Activated T-helper 2 cell treated with anti-CD3 and anti-CD28 coated beads, Interferon-gamma antibody, Interleukin-2, Interleukin-4, amounts not matched to agents 10 μg/mL and 5 μg/mL and 100 μg/mL, durations not matched to agents 14 hours and 24 hours and 36 hours (primary cell): ENCODE measurements at regions of chr11 and their contacts with region 1.

Region 1: DNA sequence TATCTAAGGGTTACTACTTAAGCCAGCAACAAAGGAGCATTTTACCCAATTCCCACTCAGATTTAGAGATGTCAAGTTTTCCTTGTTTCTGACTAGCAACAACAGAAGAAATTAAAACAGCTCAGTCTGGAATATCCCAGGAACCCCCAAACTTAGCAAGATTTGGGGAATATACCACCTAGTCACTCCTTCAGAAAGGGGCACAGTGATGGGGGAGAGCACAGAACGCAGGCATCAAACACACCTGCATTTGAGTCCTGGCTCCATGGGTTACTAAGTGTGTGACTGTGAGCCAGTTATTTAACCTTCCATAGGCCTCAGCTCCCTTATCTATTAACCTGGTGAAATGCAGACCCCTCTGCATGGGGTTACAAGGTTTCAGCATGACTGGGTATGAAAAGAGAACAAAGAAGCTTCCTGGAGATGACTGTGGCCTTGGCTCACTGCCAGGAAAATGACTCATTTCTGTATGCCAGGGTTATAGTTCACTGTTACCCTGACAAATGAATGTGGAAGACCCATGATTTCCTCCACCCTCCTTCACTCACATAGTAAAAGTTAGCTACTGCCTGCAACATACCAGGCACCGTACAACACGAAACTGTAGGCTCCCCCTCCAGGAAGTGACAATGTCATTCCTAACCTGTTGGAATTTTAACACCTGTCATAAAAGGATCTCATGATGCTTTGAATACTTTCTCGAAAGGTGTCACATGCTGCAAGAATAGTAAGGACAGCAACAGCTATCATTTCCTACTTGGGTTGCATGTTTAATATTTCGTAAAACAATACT is 79.6 kb downstream of the ME3 start:
- DNase-seq: peak; percentile 74
- H3K4me3 Mint-ChIP-seq: no peak overlapping the region
- H3K27ac Mint-ChIP-seq: peak overlapping the region; percentile 81
- H3K4me1 Mint-ChIP-seq: peaks cover 43% of the 10 kb centered on the region
- H3K27me3 Mint-ChIP-seq: no peaks in the 10 kb centered on the region

Region 2: GRCh38 chr11:85947431-85948272 is 645.2 kb before region 1 on chr11:
- intact Hi-C with region 1: loop called (anchors 5 kb)
- DNase-seq: no peak
- H3K4me3 Mint-ChIP-seq: peak overlapping the region; percentile 15
- H3K27ac Mint-ChIP-seq: peak overlapping the region; percentile 75
- H3K4me1 Mint-ChIP-seq: peaks cover 35% of the 10 kb centered on the region
- H3K27me3 Mint-ChIP-seq: no peaks in the 10 kb centered on the region

Region 3: DNA sequence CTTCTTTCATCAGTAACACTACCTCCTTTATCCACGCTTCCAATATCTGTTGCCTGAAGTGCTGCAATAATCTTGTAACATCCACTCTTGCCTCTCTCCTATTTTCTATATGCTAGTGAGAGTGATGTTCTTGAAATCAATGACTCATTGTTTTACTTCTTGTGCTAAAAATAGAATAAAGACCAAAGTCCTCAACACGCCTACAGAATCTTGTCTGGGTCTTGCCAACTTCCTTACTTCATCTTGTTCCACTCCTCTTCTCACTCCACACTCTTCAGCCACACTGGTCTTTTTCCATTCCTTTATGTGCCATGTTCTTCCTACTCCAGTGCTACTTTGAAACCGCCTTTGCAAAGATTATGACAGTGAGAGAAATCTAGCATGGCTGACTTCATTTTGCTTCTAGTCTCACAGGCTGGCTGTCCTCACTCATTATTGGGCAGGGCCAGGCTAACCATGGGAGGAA is 81.7 kb before region 1 on chr11:
- intact Hi-C with region 1: loop called (anchors 1 kb)
- DNase-seq: no peak
- H3K4me3 Mint-ChIP-seq: no peak overlapping the region
- H3K27ac Mint-ChIP-seq: no peak overlapping the region
- H3K4me1 Mint-ChIP-seq: no peaks in the 10 kb centered on the region
- H3K27me3 Mint-ChIP-seq: peaks cover under 1% of the 10 kb centered on the region

Region 4: GRCh38 chr11:86608251-86608799 is 15.5 kb after region 1 on chr11:
- intact Hi-C with region 1: loop called (anchors 1 kb)
- DNase-seq: no peak
- H3K4me3 Mint-ChIP-seq: no peak overlapping the region
- H3K27ac Mint-ChIP-seq: no peak overlapping the region
- H3K4me1 Mint-ChIP-seq: peaks cover 8% of the 10 kb centered on the region
- H3K27me3 Mint-ChIP-seq: no peaks in the 10 kb centered on the region

Region 5: DNA sequence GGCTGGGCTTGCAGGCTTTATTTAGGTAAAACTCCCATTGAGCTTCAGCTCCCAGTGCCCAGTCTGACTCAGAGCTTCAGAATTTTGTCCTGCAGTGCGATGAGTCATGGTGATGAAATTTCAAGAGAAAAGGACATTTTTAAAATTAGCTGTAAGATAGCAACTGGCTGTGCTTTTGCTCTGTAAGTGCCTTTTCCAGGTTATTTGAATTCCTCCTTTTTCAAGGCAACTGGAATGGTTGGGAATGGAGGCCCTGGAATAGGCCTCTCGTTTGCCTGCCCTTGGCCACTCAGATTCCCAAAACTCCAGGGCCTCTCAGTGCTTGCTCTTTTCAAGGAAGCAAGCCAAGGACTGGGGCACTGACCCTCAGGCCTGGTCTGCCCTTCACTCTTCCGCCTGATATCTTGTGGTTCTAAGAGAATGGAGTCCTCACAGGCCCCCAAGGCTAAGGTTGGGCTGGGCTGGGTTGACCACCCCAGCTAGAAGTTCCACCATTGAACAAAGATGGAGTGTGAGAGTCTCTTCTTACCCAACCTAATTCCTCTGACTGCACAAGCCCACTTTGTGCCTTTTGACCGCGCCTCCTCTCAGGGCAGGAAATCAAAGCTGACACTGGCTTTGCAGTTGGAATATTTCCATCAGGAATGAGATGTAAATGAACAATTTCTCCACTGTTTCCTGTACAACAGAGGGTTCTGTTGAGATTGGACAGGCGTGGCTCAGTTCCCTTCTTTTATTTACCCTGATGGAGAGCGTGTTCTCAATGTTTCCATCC is 148.0 kb after region 1 on chr11:
- intact Hi-C with region 1: loop called (anchors 1 kb)
- DNase-seq: no peak
- H3K4me3 Mint-ChIP-seq: no peak overlapping the region
- H3K27ac Mint-ChIP-seq: no peak overlapping the region
- H3K4me1 Mint-ChIP-seq: peaks cover 27% of the 10 kb centered on the region
- H3K27me3 Mint-ChIP-seq: no peaks in the 10 kb centered on the region